Heart right ventricle (tissue), 16 donors: ENCODE measurements at regions of chrX and their contacts with region 1.

Region 1: DNA sequence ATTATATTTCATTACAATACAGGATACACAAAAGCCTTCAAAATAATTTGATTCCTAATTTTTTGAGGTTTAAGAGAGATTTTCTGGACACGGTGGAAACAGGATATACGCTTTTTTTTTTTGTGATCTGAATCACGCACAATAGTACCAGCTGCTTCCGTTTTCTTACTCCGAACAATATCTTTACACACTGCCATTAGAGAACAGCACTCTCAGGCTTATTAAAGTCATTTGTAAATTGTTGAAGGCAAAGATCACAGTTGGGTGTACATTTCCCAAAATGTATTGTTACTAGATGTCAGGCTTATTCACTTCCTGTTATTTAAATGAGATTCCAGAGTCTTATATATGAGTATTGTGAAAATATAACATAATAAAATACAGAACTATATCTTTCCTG is 71.5 kb downstream of the TMEM47 start:
- DNase-seq: no peak
- ATAC-seq: no peak
- H3K4me3 ChIP-seq: peak overlapping the region in 1 of 10 donors; percentile 33
- H3K27ac ChIP-seq: peak overlapping the region in 1 of 10 donors; percentile 28
- H3K4me1 ChIP-seq: peaks cover 0 to 2% (median 0%) of the 10 kb centered on the region in 9 donors
- H3K27me3 ChIP-seq: no peaks in the 10 kb centered on the region
- CTCF ChIP-seq: no peak

Region 2: GRCh38 chrX:34631821-34632220 is 46.3 kb after region 1 on chrX:
- intact Hi-C with region 1: loop called in 1 of 10 experiments (anchors 5 kb)
- DNase-seq: no peak
- ATAC-seq: peak in 4 of 8 donors; percentile 33 to 84 (median 54)
- H3K4me3 ChIP-seq: no peak overlapping the region
- H3K27ac ChIP-seq: peak overlapping the region in 2 of 10 donors; percentile 23 to 58
- H3K4me1 ChIP-seq: peaks cover 0 to 35% (median 8%) of the 10 kb centered on the region in 9 donors
- H3K27me3 ChIP-seq: peaks cover 0 to 4% (median 0%) of the 10 kb centered on the region in 7 donors
- CTCF ChIP-seq: no peak

Region 3: DNA sequence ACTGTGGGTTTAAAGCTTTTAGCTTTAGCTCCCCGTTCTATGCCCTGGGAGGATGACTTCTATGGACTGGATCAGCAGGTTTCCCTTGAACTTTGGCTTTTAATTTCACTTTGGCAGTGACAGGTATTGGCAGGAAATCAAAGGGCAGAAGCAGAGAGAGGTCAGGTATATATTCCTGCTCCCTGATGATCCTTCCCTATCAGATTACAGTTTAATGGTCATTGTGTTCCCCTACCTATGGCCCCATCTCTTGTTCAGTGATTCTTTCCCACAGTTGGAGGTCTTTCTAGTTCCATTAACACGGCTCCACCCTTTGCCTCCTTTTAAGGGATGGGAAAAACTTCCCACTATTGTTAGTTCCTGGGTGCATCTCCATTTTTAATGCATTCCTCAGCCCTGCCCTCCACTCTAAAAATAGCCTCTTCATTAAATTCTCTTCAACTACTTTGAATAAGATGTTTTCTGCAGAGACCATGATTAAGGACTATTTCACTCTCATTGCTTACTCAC is 179.3 kb after region 1 on chrX:
- intact Hi-C with region 1: no loop called
- DNase-seq: no peak
- ATAC-seq: no peak
- H3K4me3 ChIP-seq: no peak overlapping the region
- H3K27ac ChIP-seq: no peak overlapping the region
- H3K4me1 ChIP-seq: no peaks in the 10 kb centered on the region
- H3K27me3 ChIP-seq: no peaks in the 10 kb centered on the region
- CTCF ChIP-seq: no peak